Mammary epithelial cell (primary cell): ENCODE measurements at regions of chrX and their contacts with region 1.

Region 1: DNA sequence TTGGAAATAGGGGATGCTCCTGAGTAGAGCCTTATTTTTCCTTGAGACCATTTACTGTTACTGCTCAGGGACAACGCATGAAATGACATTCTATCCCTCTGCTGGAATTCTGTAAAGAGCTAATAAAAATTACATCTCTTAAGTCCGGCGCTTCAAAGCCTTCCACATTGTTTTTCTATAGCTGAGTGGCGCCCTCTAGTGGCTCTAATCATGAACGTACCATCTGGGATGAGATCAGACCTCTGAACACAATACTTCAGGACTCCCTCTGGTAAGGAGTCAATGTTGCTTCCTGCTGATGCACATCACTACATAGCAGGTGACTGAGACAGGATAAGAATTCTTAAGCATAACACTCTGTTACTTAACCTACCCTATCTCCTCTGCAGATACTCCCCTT is 6.0 kb downstream of the HMGN5 start:
- DNase-seq: peak; percentile 33
- H3K4me3 ChIP-seq: no peak overlapping the region
- H3K27ac ChIP-seq: no peak overlapping the region
- H3K4me1 ChIP-seq: no peaks in the 10 kb centered on the region
- H3K27me3 ChIP-seq: no peaks in the 10 kb centered on the region
- CTCF ChIP-seq: peak; percentile 64 to 68

Region 2: DNA sequence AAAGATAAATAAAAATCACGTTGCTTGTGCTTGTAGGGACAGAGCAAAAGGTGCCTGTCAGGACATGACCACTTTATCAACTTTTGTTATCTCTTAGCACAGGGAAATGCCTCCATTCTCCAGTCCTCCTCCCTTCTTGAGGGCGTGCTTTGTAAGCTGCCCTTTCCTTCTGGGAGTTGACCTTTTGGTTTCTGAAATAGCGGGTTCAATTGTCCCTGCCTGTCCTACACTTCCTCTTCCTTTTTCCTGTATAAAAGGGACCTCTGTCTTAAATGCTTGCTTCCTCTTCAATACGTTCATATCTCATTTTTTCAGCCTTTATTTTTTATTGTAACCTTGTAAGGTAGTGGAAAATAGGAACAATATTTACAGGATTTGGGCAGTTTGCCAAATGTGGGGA is 159.7 kb after region 1 on chrX:
- CTCF ChIA-PET with region 1: no interaction called
- dilution Hi-C with region 1: no loop called
- in situ Hi-C with region 1: loop called in 1 of 2 experiments (anchors 25 kb)
- intact Hi-C with region 1: no loop called
- DNase-seq: no peak
- H3K4me3 ChIP-seq: no peak overlapping the region
- H3K27ac ChIP-seq: no peak overlapping the region
- H3K4me1 ChIP-seq: no peaks in the 10 kb centered on the region
- H3K27me3 ChIP-seq: no peaks in the 10 kb centered on the region
- CTCF ChIP-seq: no peak